Activated CD8-positive, alpha-beta memory T cell treated with anti-CD3 and anti-CD28 coated beads, Interleukin-2, amount 10 ng/mL, durations not matched to agents 7 days and 5 days (primary cell): ENCODE measurements at regions of chr11 and their contacts with region 1.

Region 1: DNA sequence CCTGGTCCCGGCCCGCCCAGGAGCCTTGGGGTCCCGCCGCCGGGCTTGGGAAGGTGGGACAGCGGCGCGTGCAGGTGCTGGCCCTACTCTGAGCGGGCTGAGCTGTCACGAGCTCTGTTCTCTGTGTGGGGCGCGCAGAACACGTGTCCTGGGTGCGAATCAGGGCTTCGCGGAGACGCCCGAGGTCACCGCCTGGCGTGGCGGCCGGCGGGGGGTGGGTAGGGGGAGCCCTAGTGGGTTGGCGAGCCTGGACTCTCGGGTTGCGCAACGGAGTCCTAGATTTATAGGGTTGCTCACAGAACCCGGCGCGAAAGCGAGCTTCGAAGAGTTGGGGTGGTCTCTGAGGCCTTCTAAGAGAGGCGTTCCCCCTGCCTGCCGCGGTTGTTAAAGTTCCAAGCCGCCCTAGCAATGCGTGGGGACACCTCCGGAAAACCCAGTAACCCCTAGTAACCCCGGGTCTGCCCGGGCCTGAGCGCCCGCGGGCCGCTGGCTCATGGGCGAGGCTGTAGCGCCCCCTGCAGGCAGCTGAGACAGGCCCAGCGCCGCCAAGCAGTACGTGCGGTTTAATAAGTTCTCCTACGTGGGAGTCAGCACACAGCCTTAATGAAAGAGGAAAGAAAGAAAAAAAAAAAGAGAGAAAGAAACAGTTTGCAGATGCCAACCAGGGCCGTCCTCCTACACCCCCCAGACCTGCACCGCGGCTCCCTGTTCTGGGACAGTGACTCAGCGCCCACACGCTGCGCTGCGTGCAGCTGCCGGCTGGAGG is 2.8 kb downstream of the ADM start:
- DNase-seq: peak; percentile 90
- ATAC-seq: peak; percentile 77
- H3K4me3 Mint-ChIP-seq: peak overlapping the region; percentile 87
- H3K27ac Mint-ChIP-seq: peak overlapping the region; percentile 78
- H3K4me1 Mint-ChIP-seq: peaks cover 42% of the 10 kb centered on the region
- H3K27me3 Mint-ChIP-seq: peaks cover 68% of the 10 kb centered on the region

Region 2: DNA sequence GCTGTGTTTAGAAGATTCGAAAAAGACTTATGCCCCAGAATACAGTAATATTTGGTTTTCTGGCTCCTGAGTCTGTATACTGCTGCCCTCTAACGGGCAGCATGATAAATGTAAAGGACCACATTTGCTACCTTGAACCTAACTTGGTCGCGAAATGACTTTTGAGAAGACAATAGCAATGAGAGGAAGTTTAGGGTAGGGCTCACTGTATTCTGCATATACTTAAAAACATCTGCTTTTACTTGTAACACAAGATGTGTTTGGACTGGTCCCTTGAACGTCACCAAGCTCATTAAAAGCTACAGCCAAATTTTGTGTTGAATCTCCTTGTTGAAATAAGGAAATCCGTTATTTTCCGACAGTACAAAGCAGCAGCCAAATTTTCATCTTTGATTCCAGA is 334.6 kb before region 1 on chr11:
- CTCF ChIA-PET with region 1: interaction called, 16 read pairs
- DNase-seq: peak; percentile 44
- ATAC-seq: peak; percentile 68
- H3K4me3 Mint-ChIP-seq: no peak overlapping the region
- H3K27ac Mint-ChIP-seq: no peak overlapping the region
- H3K4me1 Mint-ChIP-seq: peaks cover 3% of the 10 kb centered on the region
- H3K27me3 Mint-ChIP-seq: no peaks in the 10 kb centered on the region

Region 3: GRCh38 chr11:10208131-10208575 is 99.5 kb before region 1 on chr11:
- CTCF ChIA-PET with region 1: interaction called, 32 read pairs
- DNase-seq: no peak
- ATAC-seq: peak; percentile 63
- H3K4me3 Mint-ChIP-seq: no peak overlapping the region
- H3K27ac Mint-ChIP-seq: no peak overlapping the region
- H3K4me1 Mint-ChIP-seq: no peaks in the 10 kb centered on the region
- H3K27me3 Mint-ChIP-seq: peaks cover 9% of the 10 kb centered on the region

Region 4: DNA sequence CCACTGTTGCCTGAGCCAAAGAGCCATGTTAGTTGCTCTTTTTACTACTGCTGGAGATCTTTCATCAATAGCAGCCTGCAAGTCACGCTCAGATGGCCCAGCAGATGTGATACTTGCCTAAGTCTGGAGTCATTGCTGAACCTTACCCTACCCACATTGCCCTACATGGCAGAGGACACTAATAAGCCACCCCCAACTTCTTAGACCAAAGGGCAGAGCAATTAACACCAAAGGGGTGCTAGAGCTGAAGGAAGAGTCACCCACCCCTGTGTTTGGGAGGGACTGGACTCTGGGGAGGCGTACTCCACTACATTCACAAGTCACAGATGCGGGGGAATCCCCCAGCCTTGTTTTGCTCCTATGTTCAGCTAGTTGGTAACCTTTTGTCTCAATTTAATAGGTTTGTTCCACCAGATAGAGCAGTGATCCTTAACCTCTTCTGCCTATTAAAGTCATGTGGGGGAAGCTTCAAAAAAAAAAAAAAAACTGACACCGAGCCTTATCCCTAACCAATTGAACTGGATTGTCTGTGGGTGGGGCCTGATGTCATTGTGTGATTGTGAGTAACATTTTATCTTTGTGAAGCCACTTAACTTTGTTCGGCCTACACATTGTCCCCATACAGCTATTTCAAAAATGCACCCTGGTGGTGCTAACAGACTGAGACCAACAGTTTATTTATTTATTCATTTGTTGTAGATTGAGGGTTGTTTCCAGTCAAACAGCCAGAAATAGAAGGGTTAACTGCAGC is 10.3 kb after region 1 on chr11:
- CTCF ChIA-PET with region 1: interaction called, 28 read pairs
- DNase-seq: no peak
- ATAC-seq: no peak
- H3K4me3 Mint-ChIP-seq: no peak overlapping the region
- H3K27ac Mint-ChIP-seq: no peak overlapping the region
- H3K4me1 Mint-ChIP-seq: peaks cover 8% of the 10 kb centered on the region
- H3K27me3 Mint-ChIP-seq: peaks cover 9% of the 10 kb centered on the region